ENCODE measurements at regions of chr5 and their contacts with region 1.

Region 1: GRCh38 chr5:180825768-180826525 is 23.3 kb upstream of the MGAT1 start:
- DNase-seq: peak; percentile 85
- H3K4me3 Mint-ChIP-seq: peak overlapping the region; percentile 0
- H3K27ac Mint-ChIP-seq: peak overlapping the region; percentile 30
- H3K4me1 Mint-ChIP-seq: peaks cover 40% of the 10 kb centered on the region
- H3K27me3 Mint-ChIP-seq: no peaks in the 10 kb centered on the region
- CTCF ChIP-seq: no peak

Region 2: GRCh38 chr5:180809403-180810209 is 16.3 kb before region 1 on chr5:
- CTCF ChIA-PET with region 1: interaction called, 4 read pairs
- intact Hi-C with region 1: loop called (anchors 2 kb)
- DNase-seq: peak; percentile 90
- H3K4me3 Mint-ChIP-seq: peak overlapping the region; percentile 72
- H3K27ac Mint-ChIP-seq: peak overlapping the region; percentile 44
- H3K4me1 Mint-ChIP-seq: peaks cover 56% of the 10 kb centered on the region
- H3K27me3 Mint-ChIP-seq: no peaks in the 10 kb centered on the region
- CTCF ChIP-seq: no peak

Region 3: DNA sequence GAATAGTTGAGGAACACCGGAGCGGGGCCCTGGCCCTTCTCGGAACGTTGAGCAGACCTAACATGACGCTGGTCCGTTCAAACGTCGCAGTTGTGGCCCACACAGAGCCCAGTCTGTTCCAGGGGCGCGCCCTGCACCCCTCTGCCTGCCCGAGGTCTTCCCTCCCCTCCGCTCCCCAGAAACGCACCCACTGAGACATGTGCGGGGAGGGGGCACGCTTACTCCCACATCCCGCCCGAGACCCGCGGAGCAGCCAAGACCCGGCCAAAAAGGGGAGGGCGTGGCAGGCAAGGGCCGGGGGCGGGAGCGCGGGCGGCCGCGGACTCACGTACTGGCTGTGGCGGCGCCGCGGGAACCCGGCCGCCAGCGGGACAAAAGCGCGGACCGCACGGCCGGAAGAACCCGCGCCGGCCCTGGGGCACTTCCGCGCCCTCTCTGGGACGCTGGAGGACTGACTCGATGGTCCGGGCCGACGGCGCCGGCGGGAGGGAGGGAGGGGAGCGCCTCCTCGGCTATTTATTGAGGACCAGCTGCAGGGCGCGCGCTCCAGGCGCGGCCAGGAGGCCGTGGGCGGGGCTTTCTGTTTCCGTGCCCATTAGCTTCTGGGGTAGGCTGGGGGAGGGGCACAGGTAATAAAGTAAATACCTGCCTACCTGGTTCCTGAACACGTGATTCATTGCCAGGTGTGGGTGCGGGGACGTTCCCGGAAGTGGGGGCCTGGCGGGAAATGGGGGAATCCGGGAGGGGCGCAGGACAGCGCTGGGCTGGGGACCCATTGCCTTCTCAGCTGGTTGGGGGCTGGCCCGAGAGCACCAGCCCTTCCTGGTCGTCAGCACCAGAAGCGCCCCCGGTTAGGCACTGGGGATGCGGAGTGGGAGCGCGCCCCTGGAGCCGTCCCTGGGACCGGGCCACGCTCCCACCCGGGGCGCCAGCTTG is 35.2 kb after region 1 on chr5 and contains the start of gene ZFP62:
- CTCF ChIA-PET with region 1: interaction called, 7 read pairs
- intact Hi-C with region 1: loop called (anchors 2 kb)
- DNase-seq: peak; percentile 95
- H3K4me3 Mint-ChIP-seq: peak within 1 kb of the TSS; percentile 90
- H3K27ac Mint-ChIP-seq: peak within 1 kb of the TSS; percentile 83
- H3K4me1 Mint-ChIP-seq: peaks cover 26% of the 10 kb centered on the region
- H3K27me3 Mint-ChIP-seq: no peaks in the 10 kb centered on the region
- CTCF ChIP-seq: no peak
- total RNA-seq, gene ZFP62: 43.5 and 46.4 TPM in 2 replicates

Region 4: DNA sequence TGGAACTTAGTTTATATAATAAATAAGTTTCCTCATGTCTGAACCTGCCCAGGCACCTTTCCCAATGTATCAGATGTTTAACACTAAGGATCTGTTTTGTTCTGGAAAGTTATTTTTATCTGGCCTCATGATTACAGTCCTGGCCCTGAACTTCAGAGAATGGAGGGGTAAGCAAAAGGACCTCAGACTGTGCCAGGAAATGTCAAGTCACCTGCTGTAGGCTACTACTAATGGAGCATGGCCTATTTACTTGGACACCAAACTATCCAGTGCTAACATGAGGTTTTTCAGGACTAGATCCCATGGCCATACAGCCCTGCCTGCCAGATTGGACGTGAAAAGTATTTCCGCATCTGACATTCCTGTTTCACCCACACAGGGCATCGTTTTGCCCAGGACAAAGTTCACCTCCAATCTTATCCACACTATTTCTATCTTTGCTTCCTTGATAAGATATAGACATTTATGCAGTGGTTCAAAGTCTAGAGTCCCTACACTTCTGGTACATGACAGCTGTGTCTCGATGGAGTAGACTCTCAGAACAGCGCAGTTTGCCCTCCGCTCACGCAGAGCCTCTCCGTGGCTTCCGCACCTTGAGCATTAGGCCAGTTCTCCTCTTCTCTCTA is 72.8 kb after region 1 on chr5 and contains the start of gene BTNL8:
- CTCF ChIA-PET with region 1: no interaction called
- intact Hi-C with region 1: no loop called
- DNase-seq: no peak
- H3K4me3 Mint-ChIP-seq: no peak within 1 kb of the TSS
- H3K27ac Mint-ChIP-seq: no peak within 1 kb of the TSS
- H3K4me1 Mint-ChIP-seq: peaks cover 10% of the 10 kb centered on the region
- H3K27me3 Mint-ChIP-seq: peaks cover 7% of the 10 kb centered on the region
- CTCF ChIP-seq: no peak
- total RNA-seq, gene BTNL8: not detected in 2 replicates

Region 5: DNA sequence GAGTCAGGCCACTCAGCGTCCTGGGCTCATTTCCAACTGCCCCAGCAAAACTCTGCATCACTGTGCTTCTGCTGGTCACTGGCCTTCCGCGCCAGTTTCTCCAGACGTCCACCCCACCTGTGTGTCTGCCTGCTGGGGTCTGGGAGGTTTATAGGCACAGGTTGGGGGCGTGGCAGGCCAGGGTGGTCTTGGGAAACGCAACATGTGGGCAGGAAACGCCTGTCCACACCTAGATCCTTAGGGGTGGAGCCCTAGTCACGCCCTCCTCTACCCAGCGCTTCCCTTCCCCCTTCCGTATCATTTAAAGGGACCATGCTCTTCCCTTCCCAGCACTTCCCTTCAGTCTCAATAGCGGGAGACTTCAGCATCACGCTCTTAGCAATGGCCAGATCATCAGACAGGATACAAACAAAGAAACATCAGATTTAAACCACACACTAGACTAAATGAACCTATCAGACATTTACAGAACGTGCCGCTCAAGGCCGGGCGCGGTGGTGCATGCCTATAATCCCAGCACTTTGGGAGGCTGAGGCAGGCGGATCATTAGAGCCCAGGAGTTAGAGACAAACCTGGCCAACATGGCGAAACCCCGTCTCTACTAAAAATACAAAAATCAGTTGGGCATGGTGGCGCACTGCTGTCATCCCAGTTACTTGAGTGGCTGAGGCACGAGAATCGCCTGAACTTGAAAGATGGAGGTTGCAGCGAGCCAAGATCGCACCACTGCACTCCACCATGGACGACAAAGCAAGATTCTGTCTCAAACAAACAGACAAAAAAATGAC is 202.3 kb after region 1 on chr5:
- CTCF ChIA-PET with region 1: no interaction called
- intact Hi-C with region 1: no loop called
- DNase-seq: peak; percentile 51
- H3K4me3 Mint-ChIP-seq: peak overlapping the region; percentile 67
- H3K27ac Mint-ChIP-seq: peak overlapping the region; percentile 25
- H3K4me1 Mint-ChIP-seq: no peaks in the 10 kb centered on the region
- H3K27me3 Mint-ChIP-seq: no peaks in the 10 kb centered on the region
- CTCF ChIP-seq: no peak